Activated naive CD4-positive, alpha-beta T cell treated with anti-CD3 and anti-CD28 coated beads, Interleukin-2, amount 10 ng/mL, durations not matched to agents 7 days and 5 days (primary cell): ENCODE measurements at regions of chr1 and their contacts with region 1.

Region 1: DNA sequence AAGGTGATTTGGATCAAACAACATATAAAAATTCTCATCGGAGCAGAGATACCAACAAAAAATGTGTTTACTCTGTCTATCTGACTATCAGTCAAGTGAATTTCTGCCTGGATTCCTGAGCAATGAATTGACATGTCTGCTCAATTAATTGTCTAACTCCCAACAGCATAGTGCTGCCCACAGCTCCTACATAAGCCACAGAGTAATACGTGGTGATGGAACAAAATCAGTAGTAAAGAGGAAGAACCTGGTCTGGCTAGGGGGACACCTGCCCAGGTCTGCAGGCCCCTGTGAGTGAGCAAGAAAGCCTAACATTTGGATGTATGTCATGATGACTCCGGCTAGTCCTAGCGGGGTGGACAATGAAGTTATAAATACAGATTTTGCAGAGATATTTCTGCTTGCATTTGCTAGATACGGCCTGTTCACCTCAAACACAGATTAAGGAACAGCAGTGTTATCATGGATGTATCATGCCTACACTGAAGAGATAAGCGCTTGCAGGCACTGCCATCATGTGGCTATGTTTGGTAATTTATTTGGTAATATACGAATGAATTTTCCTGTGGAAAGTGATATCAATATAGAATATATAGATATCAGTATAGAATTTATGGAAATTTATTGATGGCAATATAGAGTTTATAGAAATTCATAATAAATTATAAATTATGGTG is 69.6 kb upstream of the LRRC8B start:
- DNase-seq: peak; percentile 77
- H3K4me3 Mint-ChIP-seq: no peak overlapping the region
- H3K27ac Mint-ChIP-seq: no peak overlapping the region
- H3K4me1 Mint-ChIP-seq: peaks cover 15% of the 10 kb centered on the region
- H3K27me3 Mint-ChIP-seq: peaks cover 33% of the 10 kb centered on the region

Region 2: DNA sequence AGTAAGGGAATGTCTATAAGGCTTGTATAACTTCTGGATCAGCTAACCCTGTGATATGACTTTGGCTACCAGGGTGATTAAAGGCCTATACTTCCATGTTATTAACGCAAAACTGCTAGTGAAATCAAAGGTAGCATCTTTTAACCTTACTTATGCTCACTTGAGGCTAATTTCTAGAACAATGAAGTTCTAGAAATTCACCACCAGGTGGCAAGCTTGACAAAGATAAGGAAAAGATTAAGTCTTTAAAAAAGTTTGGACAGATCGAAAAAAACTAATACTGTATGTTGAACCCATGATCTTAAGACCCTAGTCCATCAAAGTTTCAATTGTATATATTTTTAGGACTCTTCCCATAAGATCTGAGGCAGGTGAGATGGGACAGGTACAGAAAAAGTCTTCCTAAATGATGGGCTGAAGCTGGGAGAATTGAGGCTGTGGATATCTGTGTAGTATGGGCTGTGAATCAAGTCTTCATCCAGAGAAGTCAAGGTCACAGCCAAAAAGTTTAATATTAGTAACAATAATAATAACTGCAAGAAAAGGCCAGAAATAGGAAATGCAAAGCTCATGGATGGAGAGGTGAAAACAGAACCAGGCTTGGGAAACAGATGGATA is 481.4 kb before region 1 on chr1:
- CTCF ChIA-PET with region 1: interaction called, 10 read pairs
- DNase-seq: no peak
- H3K4me3 Mint-ChIP-seq: no peak overlapping the region
- H3K27ac Mint-ChIP-seq: no peak overlapping the region
- H3K4me1 Mint-ChIP-seq: peaks cover 20% of the 10 kb centered on the region
- H3K27me3 Mint-ChIP-seq: no peaks in the 10 kb centered on the region

Region 3: GRCh38 chr1:88998716-88999115 is 456.3 kb before region 1 on chr1:
- CTCF ChIA-PET with region 1: interaction called, 61 read pairs
- DNase-seq: peak; percentile 35
- H3K4me3 Mint-ChIP-seq: no peak overlapping the region
- H3K27ac Mint-ChIP-seq: no peak overlapping the region
- H3K4me1 Mint-ChIP-seq: peaks cover 36% of the 10 kb centered on the region
- H3K27me3 Mint-ChIP-seq: no peaks in the 10 kb centered on the region

Region 4: DNA sequence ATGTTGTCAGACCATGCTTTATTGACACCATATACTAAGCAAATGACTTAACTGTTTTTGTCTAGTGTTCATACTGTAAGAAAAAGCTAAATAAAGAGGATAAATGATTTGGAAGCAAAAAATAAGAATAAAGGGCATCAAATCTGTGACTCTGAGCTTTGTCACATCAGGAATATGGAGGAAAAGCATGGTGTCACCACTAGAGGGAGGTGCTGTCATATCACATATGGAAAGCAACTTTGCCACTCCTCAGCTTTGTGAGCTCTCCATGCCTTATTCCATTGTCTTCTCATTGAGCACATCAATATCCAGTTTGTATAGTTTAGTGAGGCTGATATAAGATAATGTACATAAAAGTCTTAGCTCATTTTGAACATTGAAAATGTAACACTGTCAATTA is 369.2 kb before region 1 on chr1:
- CTCF ChIA-PET with region 1: interaction called, 10 read pairs
- DNase-seq: peak; percentile 59
- H3K4me3 Mint-ChIP-seq: no peak overlapping the region
- H3K27ac Mint-ChIP-seq: no peak overlapping the region
- H3K4me1 Mint-ChIP-seq: peaks cover 2% of the 10 kb centered on the region
- H3K27me3 Mint-ChIP-seq: no peaks in the 10 kb centered on the region

Region 5: GRCh38 chr1:89476072-89476471 is 21.1 kb after region 1 on chr1:
- CTCF ChIA-PET with region 1: no interaction called
- DNase-seq: no peak
- H3K4me3 Mint-ChIP-seq: no peak overlapping the region
- H3K27ac Mint-ChIP-seq: no peak overlapping the region
- H3K4me1 Mint-ChIP-seq: peaks cover 3% of the 10 kb centered on the region
- H3K27me3 Mint-ChIP-seq: peaks cover 31% of the 10 kb centered on the region

Region 6: GRCh38 chr1:89503690-89504089 is 48.7 kb after region 1 on chr1:
- CTCF ChIA-PET with region 1: no interaction called
- DNase-seq: no peak
- H3K4me3 Mint-ChIP-seq: no peak overlapping the region
- H3K27ac Mint-ChIP-seq: no peak overlapping the region
- H3K4me1 Mint-ChIP-seq: no peaks in the 10 kb centered on the region
- H3K27me3 Mint-ChIP-seq: peaks cover 36% of the 10 kb centered on the region